ENCODE measurements at regions of chr2 and their contacts with region 1.

Region 1: DNA sequence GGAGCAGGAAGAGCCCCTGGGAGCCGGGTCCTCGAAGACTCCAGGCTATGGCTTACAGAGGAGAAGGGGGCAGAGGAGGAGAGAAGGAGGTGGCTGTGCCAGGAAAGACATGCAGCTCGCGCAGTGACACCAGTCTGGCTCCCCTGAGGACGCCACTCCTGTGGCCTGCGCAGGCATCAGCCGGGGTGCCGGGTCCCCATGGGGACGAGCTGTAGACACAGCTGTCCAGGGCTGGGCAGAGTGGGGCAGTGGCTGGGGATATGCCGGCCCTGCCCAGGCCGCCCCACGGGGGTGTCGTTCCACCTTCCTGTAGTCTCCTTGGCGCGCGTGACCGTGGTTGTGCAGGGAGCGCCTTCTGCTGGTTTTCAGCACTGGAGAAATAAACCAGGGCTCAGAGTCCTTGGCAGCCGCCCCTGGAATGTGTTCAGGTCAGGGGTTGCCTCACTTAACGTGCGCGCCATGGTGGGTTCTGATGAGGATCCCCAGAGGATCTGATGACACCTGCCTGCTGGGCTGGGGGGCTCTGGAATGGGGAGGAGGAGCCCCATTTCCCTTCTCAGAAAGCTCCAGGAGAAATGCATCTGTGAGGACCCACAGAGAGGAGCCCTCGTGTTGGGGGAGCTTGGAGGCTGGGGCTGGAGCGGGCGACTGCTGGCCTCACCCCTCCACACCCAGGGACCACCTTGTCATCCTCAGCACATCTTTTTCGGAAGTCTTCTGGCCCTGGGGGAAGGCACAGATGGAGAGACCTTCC is 26.7 kb downstream of the RAMP1 start:
- DNase-seq: no peak
- H3K4me3 ChIP-seq: no peak overlapping the region
- H3K27ac ChIP-seq: peak overlapping the region; percentile 66 to 71
- H3K4me1 ChIP-seq: no peaks in the 10 kb centered on the region
- H3K27me3 ChIP-seq: no peaks in the 10 kb centered on the region
- CTCF ChIP-seq: peak in 2 of 4 experiments; percentile 10 to 15
- POLR2A ChIP-seq: no peak

Region 2: DNA sequence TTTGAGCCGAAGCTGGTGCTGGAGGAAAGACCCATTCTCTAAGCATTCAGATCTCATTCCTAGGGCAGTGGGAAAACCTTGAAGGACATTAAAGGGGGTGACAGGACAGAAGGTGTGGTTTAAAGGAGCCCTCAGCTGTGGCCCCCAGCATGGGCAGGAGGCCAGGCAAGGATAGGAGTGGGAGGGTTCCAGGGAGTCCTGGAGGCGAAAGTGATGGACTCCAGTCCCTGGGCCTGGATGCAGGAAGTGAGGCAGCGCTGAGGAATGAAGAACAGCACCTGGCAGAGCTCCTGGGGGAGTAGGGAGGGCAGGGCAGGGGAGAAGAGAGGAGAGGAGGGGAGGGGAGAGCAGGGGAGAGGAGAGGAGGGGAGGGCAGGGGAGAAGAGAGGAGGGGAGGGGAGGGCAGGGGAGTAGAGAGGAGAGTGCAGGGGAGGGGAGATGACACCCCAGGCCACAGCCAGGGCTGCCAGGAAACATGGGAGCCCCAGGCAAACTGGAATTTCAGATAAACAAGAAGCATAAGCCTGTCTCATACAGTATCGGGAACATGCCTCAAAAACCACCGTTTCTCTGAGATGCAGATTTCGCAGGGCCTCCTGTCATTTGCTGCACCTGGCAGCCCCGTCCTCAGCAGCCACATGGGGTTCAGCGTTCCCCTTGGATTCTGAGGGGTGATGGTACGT is 21.0 kb before region 1 on chr2:
- intact Hi-C with region 1: loop called (anchors 1 kb)
- DNase-seq: peak; percentile 45
- H3K4me3 ChIP-seq: no peak overlapping the region
- H3K27ac ChIP-seq: peak overlapping the region; percentile 53 to 76
- H3K4me1 ChIP-seq: peaks cover 3% of the 10 kb centered on the region
- H3K27me3 ChIP-seq: no peaks in the 10 kb centered on the region
- CTCF ChIP-seq: no peak
- POLR2A ChIP-seq: no peak

Measured in prostate gland (tissue), 2 donors.